Panc1 (cell line): ENCODE measurements at regions of chr2 and their contacts with region 1.

Region 1: GRCh38 chr2:47437287-47437686 is 34.3 kb downstream of the MSH2 start:
- DNase-seq: no peak
- ATAC-seq: no peak
- H3K4me3 ChIP-seq: no peak overlapping the region
- H3K27ac ChIP-seq: no peak overlapping the region
- H3K4me1 ChIP-seq: no peaks in the 10 kb centered on the region
- H3K27me3 ChIP-seq: no peaks in the 10 kb centered on the region
- CTCF ChIP-seq: no peak

Region 2: GRCh38 chr2:47344890-47345589 is 92.2 kb before region 1 on chr2:
- CTCF ChIA-PET with region 1: no interaction called
- POLR2A ChIA-PET with region 1: no interaction called
- in situ Hi-C with region 1: no loop called
- intact Hi-C with region 1: no loop called
- DNase-seq: no peak
- ATAC-seq: peak; percentile 99
- H3K4me3 ChIP-seq: peak overlapping the region; percentile 50 to 75
- H3K27ac ChIP-seq: peak overlapping the region; percentile 98
- H3K4me1 ChIP-seq: peaks cover 14% of the 10 kb centered on the region
- H3K27me3 ChIP-seq: no peaks in the 10 kb centered on the region
- CTCF ChIP-seq: no peak

Region 3: DNA sequence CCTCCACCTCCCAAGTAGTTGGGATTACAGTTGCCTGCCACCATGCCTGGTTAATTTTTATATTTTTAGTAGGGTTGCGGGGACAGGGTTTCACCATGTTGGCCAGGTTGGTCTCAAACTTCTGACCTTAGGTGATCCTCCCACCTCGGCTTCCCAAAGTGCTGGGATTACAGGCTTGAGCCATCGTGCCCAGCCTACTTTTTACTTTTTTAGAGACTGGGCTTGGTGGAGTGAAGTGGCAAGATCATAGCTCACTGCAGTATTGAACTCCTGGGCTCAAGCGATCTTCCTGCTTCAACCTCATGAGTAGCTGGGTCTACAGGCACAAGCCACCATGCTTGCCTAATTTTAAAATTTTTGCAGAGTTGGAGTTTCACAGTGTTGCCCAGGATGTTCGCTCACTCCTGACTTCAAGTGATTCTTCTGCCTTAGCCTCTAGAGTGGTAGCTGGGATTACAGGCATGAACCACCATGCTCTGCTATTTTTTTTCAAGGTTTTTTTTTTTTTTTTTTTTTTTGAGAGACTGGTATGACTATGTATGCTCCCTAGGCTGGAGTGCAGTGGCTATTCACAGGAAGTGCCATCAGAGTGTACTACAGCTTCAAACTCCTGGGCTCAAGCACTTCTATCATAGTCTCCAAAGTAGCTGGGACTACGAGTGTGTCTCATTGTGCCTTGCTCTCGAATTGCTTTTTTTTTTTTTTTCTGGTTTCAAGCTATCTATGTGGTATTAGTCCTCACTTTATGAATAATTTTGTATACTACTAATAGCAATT is 22.4 kb before region 1 on chr2:
- CTCF ChIA-PET with region 1: no interaction called
- POLR2A ChIA-PET with region 1: no interaction called
- in situ Hi-C with region 1: no loop called
- intact Hi-C with region 1: no loop called
- DNase-seq: no peak
- ATAC-seq: no peak; the same call in 1 of the 2 replicates
- H3K4me3 ChIP-seq: no peak overlapping the region
- H3K27ac ChIP-seq: no peak overlapping the region
- H3K4me1 ChIP-seq: no peaks in the 10 kb centered on the region
- H3K27me3 ChIP-seq: no peaks in the 10 kb centered on the region
- CTCF ChIP-seq: no peak

Region 4: DNA sequence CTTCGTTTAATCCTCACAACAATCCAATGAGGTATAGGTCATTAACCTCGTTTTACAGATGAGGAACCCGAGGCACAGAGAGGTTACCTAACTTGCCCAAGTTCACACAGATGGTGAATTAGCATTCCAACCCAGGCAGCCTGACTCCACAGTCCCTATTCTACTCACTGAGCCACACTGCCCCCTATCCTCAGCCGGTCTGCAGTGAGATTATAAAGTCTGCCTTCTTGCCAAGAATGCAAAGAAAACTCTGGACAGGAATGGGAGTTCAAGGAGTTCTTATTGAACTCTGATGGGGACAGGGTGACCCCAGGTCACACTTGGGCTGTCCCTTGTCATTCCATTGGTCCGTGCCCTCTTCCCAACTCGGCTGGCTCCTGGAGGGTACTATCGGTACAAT is 227.5 kb after region 1 on chr2:
- CTCF ChIA-PET with region 1: interaction called, 11 read pairs
- POLR2A ChIA-PET with region 1: no interaction called
- in situ Hi-C with region 1: no loop called
- intact Hi-C with region 1: no loop called
- DNase-seq: no peak
- ATAC-seq: peak; percentile 63; the same call in 1 of the 2 replicates
- H3K4me3 ChIP-seq: no peak overlapping the region
- H3K27ac ChIP-seq: no peak overlapping the region
- H3K4me1 ChIP-seq: no peaks in the 10 kb centered on the region
- H3K27me3 ChIP-seq: no peaks in the 10 kb centered on the region
- CTCF ChIP-seq: peak; percentile 52; the same call in 1 of the 2 replicates